Cardiac septum (tissue), 1 donor: ENCODE measurements at regions of chr12 and their contacts with region 1.

Region 1: DNA sequence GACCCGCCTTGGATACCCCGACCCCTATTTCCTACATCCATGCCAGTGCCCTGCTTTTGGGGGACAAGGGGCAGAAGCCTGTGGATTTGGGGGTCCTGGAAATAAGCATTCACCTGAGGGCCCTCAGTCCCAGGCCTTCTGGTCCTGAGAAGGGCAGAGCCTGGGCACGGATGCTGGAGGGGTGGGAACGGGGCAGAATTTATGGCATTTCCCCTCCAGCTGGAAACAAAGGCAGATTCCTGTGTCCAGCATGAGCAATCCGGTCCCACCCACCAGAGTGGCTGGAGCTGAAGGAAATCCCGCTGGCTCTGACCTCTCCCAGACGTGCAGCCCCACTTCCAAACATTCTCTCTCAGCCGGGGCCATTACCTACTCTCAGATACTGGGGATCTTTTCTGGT is 9.3 kb downstream of the ANKRD33 start:
- DNase-seq: no peak

Region 2: GRCh38 chr12:51449577-51450246 is 447.5 kb before region 1 on chr12:
- intact Hi-C with region 1: no loop called
- DNase-seq: no peak

Region 3: GRCh38 chr12:51695241-51696010 is 201.8 kb before region 1 on chr12:
- intact Hi-C with region 1: no loop called
- DNase-seq: no peak

Region 4: DNA sequence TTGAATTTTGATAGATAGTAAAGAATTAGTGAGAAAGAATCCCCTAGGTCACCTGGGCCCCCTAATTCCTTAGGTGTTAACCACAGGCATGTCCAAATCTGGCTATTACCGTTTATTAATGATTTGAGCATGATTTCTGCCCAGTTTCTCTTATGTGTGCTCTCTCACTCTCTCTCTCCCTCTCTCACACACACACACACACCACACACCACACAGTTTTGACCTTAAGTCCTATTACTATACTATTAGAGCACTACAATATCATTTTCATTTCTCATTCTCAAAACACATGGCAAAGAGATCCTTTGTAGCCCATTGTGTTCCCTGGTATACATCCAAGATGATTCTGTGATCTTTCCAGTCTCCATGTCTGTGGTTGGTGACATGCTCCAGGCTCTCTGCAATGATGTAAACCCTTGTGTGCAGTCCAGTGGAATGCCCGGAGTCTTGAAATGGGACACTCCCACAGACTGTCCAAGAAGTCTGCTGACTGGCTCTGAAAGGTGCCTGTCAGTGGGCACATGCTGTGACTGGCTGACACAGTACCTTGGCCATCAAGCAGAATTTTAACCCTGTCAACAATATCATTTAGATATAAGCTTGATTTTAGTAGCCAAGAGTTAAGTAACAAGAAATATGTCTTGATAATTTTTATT is 144.8 kb before region 1 on chr12:
- intact Hi-C with region 1: no loop called
- DNase-seq: no peak

Region 5: GRCh38 chr12:51923501-51924271 is 26.5 kb after region 1 on chr12:
- intact Hi-C with region 1: loop called (anchors 2 kb)
- DNase-seq: peak; percentile 87

Region 6: GRCh38 chr12:51959211-51959610 is 62.0 kb after region 1 on chr12:
- intact Hi-C with region 1: no loop called
- DNase-seq: no peak

Region 7: GRCh38 chr12:51980051-51980808 is 83.0 kb after region 1 on chr12:
- intact Hi-C with region 1: loop called (anchors 1 kb)
- DNase-seq: peak; percentile 90